ENCODE measurements at regions of chr12 and their contacts with region 1.

Region 1: DNA sequence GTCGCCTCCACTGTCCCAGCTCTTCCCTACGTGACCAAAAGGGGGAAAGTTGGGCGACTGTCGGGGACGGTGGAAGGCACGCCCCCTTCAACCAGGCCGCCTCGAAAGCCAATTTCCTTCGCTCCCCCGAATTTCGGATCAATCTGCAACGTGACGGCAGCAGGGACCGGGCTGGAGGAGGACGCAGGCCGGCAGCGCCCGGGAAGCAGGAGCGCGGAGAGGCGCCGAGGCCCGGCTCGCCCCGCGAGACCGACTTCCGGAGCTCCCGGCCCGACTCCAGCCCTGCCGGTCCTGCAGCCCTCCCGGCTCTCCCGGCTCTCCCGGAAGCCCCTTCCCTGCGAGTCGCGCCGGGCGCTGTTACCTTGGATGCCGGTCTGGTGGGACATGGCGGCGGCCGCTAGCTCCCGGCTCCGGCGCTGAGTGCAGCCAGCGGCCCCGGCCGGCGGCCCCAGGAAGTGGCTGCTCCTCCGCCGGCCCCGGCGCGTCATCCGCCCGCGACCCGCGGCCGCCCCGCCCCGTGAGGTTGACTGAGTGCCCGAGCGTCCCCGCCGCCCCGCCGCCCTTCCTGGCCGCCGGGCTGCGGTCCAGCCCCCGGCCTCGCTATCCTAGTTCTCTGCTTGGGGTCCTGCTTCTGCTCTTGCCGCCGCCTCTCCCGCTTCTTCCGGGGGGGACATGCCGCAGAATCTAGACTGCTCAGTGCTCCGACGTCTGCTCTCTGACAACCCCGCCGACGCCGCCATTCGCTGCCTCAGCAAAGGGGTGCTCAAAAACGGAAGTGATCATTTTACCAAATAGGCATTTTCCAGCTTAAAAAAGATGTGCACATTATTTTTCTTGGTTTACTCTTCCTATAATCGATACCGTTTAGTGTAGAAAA is at the start of gene TWF1:
- DNase-seq: peak; percentile 78 to 91 (median 87)
- H3K4me3 ChIP-seq: peak within 1 kb of the TSS; percentile 88
- H3K4me3 Mint-ChIP-seq: peak within 1 kb of the TSS; percentile 98 to 100 (median 99)
- H3K27ac ChIP-seq: peak within 1 kb of the TSS; percentile 96
- H3K27ac Mint-ChIP-seq: peak within 1 kb of the TSS; percentile 99 to 100 (median 100)
- H3K4me1 ChIP-seq: peaks cover 32% of the 10 kb centered on the region
- H3K4me1 Mint-ChIP-seq: peaks cover 32 to 51% (median 44%) of the 10 kb centered on the region in 3 donors
- H3K27me3 ChIP-seq: no peaks in the 10 kb centered on the region
- H3K27me3 Mint-ChIP-seq: no peaks in the 10 kb centered on the region
- total RNA-seq, gene TWF1: 29.7 to 32.1 TPM

Region 2: GRCh38 chr12:43758728-43759563 is 47.2 kb before region 1 on chr12 and contains the starts of genes IRAK4 and PUS7L:
- CTCF ChIA-PET with region 1: interaction called, 15 read pairs
- POLR2A ChIA-PET with region 1: interaction called, 30 read pairs
- DNase-seq: peak; percentile 93 to 97 (median 94)
- H3K4me3 ChIP-seq: peak within 1 kb of the TSS; percentile 63
- H3K4me3 Mint-ChIP-seq: peak within 1 kb of the TSS; percentile 94 to 99 (median 98)
- H3K27ac ChIP-seq: peak within 1 kb of the TSS; percentile 93
- H3K27ac Mint-ChIP-seq: peak within 1 kb of the TSS; percentile 98 to 100 (median 99)
- H3K4me1 ChIP-seq: peaks cover 46% of the 10 kb centered on the region
- H3K4me1 Mint-ChIP-seq: peaks cover 73 to 90% (median 88%) of the 10 kb centered on the region in 3 donors
- H3K27me3 ChIP-seq: no peaks in the 10 kb centered on the region
- H3K27me3 Mint-ChIP-seq: peaks cover 0 to 2% of the 10 kb centered on the region in 2 donors
- total RNA-seq, gene IRAK4: 23.6 to 25.7 TPM
- total RNA-seq, gene PUS7L: 17.8 to 21.4 TPM

Region 3: DNA sequence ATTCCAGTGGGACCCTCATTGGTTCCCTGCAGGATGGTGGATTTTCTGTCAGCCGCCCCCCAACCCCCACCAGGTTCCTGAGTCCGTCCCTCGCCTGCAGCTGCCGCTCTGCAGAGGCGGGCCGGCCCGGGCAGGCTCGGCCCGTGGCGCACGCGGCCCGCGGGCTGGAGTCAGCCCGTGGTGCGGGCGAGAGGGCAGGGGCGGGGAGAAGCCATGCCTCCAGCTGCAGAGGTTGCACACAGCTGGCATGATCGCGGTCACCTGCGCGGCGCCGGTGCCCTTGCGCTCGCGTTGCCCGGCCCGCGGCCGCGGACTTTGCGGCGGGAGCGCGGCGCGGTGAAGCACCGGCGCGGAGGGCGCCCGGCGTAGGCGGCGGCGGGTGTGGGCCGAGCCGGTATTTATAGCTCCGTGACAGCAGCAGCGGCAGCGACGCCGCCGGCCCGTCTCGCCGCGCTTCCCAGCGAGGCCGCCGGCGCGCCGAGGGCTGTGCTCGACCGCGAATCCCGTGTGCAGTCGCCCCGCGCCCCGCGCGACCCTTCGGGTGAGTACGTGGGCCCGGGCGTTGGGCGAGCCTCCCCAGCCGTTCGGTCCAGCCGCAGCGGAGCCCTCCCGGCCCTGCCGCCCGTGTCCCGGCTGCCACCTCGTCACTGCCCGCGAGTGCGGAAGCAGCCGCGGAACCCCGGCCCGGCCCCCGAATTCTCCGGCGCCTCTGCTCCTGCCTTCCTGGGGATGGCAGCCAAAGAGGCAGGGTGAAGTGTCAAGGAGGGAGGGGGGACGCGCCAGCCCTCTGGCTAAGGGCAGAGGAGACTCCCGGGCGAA is 29.8 kb after region 1 on chr12 and contains the start of gene TMEM117:
- CTCF ChIA-PET with region 1: interaction called, 23 read pairs
- POLR2A ChIA-PET with region 1: interaction called, 35 read pairs
- DNase-seq: peak; percentile 50 to 77 (median 69)
- H3K4me3 ChIP-seq: peak within 1 kb of the TSS; percentile 60
- H3K4me3 Mint-ChIP-seq: peak within 1 kb of the TSS; percentile 81 to 96 (median 92)
- H3K27ac ChIP-seq: peak within 1 kb of the TSS; percentile 68
- H3K27ac Mint-ChIP-seq: peak within 1 kb of the TSS; percentile 78 to 97 (median 93)
- H3K4me1 ChIP-seq: peaks cover 36% of the 10 kb centered on the region
- H3K4me1 Mint-ChIP-seq: peaks cover 47 to 64% (median 49%) of the 10 kb centered on the region in 3 donors
- H3K27me3 ChIP-seq: no peaks in the 10 kb centered on the region
- H3K27me3 Mint-ChIP-seq: no peaks in the 10 kb centered on the region
- total RNA-seq, gene TMEM117: 1.4 to 1.8 TPM

Region 4: DNA sequence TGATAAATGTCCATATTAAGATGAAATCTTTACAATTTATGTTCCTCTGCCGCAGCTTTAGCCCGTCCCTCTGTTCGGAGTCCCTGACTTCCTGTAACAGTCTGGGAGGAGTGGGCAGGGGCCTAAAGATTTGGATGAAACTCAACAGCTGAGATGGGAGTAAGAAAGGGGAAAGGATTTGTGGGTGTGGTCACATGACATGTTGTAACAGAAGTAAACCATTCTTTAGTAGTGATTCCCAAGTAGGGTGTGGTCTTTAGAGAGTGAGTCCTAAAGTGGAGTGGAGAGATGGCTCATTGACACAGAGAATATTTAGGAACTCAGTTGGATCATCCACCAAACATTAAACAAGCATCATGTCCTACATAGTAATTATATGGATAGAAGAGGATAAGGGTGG is 42.7 kb after region 1 on chr12:
- CTCF ChIA-PET with region 1: no interaction called
- POLR2A ChIA-PET with region 1: no interaction called
- DNase-seq: no peak
- H3K4me3 ChIP-seq: no peak overlapping the region
- H3K4me3 Mint-ChIP-seq: no peak overlapping the region
- H3K27ac ChIP-seq: no peak overlapping the region
- H3K27ac Mint-ChIP-seq: peak overlapping the region in 1 of 8 donors; percentile 74
- H3K4me1 ChIP-seq: no peaks in the 10 kb centered on the region
- H3K4me1 Mint-ChIP-seq: peaks cover 0 to 1% (median under 1%) of the 10 kb centered on the region in 3 donors
- H3K27me3 ChIP-seq: no peaks in the 10 kb centered on the region
- H3K27me3 Mint-ChIP-seq: no peaks in the 10 kb centered on the region

Region 5: GRCh38 chr12:43976027-43976426 is 169.9 kb after region 1 on chr12:
- CTCF ChIA-PET with region 1: no interaction called
- POLR2A ChIA-PET with region 1: no interaction called
- DNase-seq: no peak
- H3K4me3 ChIP-seq: no peak overlapping the region
- H3K4me3 Mint-ChIP-seq: no peak overlapping the region
- H3K27ac ChIP-seq: no peak overlapping the region
- H3K27ac Mint-ChIP-seq: no peak overlapping the region
- H3K4me1 ChIP-seq: no peaks in the 10 kb centered on the region
- H3K4me1 Mint-ChIP-seq: no peaks in the 10 kb centered on the region
- H3K27me3 ChIP-seq: no peaks in the 10 kb centered on the region
- H3K27me3 Mint-ChIP-seq: no peaks in the 10 kb centered on the region

Measured in CD8-positive, alpha-beta memory T cell (primary cell).